HEK293 (cell line): ENCODE measurements at regions of chr6 and their contacts with region 1.

Region 1: DNA sequence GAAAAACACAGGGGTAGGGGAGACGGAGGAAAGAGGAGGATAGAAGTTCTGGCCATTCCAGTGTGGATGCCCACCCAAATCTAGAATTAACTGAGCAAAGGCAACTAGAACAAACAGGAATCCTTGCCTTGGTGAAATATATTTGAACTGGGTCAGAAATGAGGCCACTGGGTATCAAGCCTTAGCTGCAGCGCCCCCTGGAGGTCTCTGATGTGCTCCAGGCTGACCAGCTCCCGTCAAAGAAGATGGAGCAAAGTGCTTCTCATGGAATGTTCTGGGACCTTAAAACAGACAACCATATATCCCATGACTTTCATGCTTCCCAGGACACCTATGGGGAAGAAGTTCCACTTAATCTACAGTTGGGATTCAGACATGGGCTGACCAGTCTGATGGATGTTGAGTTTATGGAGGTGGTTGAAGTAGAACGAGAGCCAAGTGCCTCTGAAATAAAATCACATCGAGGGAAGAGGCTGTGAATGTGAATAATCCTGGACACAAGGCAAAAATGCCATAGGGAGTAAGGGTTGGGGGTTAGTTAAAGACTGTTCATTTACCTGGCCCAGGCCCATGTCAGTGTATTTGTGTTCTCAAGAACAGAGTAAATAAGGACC is 50.4 kb downstream of the HLA-DPB1 start:
- H3K4me3 ChIP-seq: no peak overlapping the region
- H3K27ac ChIP-seq: no peak overlapping the region
- H3K4me1 ChIP-seq: no peaks in the 10 kb centered on the region
- CTCF ChIP-seq: no peak

Region 2: GRCh38 chr6:33061987-33062386 is 64.2 kb before region 1 on chr6:
- CTCF ChIA-PET with region 1: no interaction called
- POLR2A ChIA-PET with region 1: no interaction called
- H3K4me3 ChIP-seq: no peak overlapping the region
- H3K27ac ChIP-seq: no peak overlapping the region
- H3K4me1 ChIP-seq: no peaks in the 10 kb centered on the region; the same call in 1 of the 2 replicates
- CTCF ChIP-seq: no peak

Region 3: GRCh38 chr6:33095681-33096080 is 30.5 kb before region 1 on chr6:
- CTCF ChIA-PET with region 1: no interaction called
- POLR2A ChIA-PET with region 1: no interaction called
- H3K4me3 ChIP-seq: no peak overlapping the region
- H3K27ac ChIP-seq: no peak overlapping the region
- H3K4me1 ChIP-seq: no peaks in the 10 kb centered on the region
- CTCF ChIP-seq: no peak

Region 4: DNA sequence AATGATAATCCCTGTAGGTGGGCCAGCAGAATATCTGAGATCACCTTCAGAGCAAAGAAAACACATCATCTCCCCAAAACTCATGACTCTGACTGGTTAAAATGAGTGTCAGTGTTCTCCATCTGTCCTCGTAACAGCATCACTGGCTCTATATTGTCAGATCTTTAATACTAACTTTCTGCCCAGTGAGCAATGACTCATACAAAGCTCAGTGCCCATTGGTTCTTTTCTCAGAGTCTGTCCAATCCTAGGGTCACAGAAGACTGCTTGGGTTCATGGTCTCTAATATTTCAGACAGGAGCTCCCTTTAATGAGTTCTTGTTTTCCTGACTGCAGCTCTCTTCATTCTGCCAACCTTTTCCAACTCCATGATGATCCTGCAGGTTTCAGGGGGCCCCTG is 14.1 kb before region 1 on chr6:
- CTCF ChIA-PET with region 1: interaction called, 32 read pairs
- POLR2A ChIA-PET with region 1: no interaction called
- H3K4me3 ChIP-seq: no peak overlapping the region
- H3K27ac ChIP-seq: no peak overlapping the region
- H3K4me1 ChIP-seq: no peaks in the 10 kb centered on the region
- CTCF ChIP-seq: no peak

Region 5: GRCh38 chr6:33139596-33140206 is 13.5 kb after region 1 on chr6:
- CTCF ChIA-PET with region 1: interaction called, 176 read pairs
- POLR2A ChIA-PET with region 1: no interaction called
- H3K4me3 ChIP-seq: no peak overlapping the region
- H3K27ac ChIP-seq: no peak overlapping the region
- H3K4me1 ChIP-seq: no peaks in the 10 kb centered on the region
- CTCF ChIP-seq: no peak

Region 6: DNA sequence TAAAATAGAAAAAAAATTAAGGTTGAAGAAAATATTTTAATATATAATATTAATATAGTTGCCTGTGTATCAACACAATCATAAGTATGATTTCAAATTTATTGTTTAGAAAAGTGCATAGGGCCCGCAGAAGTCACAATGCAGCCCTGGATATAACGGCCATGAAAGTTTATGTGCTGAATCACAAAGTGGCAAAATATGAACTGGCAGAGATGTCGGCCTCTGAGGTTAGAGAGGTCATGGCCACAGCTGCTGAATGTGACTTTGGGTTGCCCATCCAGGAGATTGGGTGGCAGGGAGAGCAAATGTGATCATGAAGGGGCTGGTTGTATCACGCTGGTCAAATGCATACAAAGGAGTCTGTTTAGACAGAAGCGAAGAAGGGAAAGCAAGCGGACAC is 30.4 kb after region 1 on chr6:
- CTCF ChIA-PET with region 1: interaction called, 17 read pairs
- POLR2A ChIA-PET with region 1: no interaction called
- H3K4me3 ChIP-seq: no peak overlapping the region
- H3K27ac ChIP-seq: no peak overlapping the region
- H3K4me1 ChIP-seq: 0 out of 2 replicates have a peak, but pooled peaks cover 2% of the 10 kb centered on the region
- CTCF ChIP-seq: no peak

Region 7: GRCh38 chr6:33200219-33201146 is 74.3 kb after region 1 on chr6 and contains the starts of genes RXRB and SLC39A7:
- CTCF ChIA-PET with region 1: interaction called, 15 read pairs
- POLR2A ChIA-PET with region 1: no interaction called
- H3K4me3 ChIP-seq: peak within 1 kb of the TSS; percentile 75
- H3K27ac ChIP-seq: peak within 1 kb of the TSS; percentile 98
- H3K4me1 ChIP-seq: peaks cover 23% of the 10 kb centered on the region
- CTCF ChIP-seq: no peak

Region 8: GRCh38 chr6:33384581-33385020 is 258.4 kb after region 1 on chr6:
- CTCF ChIA-PET with region 1: no interaction called
- POLR2A ChIA-PET with region 1: no interaction called
- H3K4me3 ChIP-seq: no peak overlapping the region
- H3K27ac ChIP-seq: no peak overlapping the region
- H3K4me1 ChIP-seq: no peaks in the 10 kb centered on the region
- CTCF ChIP-seq: peak; percentile 51; the same call in 1 of the 2 replicates